ENCODE measurements at regions of chr12 and their contacts with region 1.

Region 1: GRCh38 chr12:85476756-85477155 is 196.7 kb downstream of the ALX1 start:
- DNase-seq: no peak
- ATAC-seq: no peak
- H3K4me3 ChIP-seq: no peak overlapping the region
- H3K27ac ChIP-seq: no peak overlapping the region
- H3K4me1 ChIP-seq: no peaks in the 10 kb centered on the region
- H3K27me3 ChIP-seq: no peaks in the 10 kb centered on the region
- CTCF ChIP-seq: no peak
- POLR2A ChIP-seq: no peak

Region 2: GRCh38 chr12:85568395-85569103 is 91.8 kb after region 1 on chr12:
- intact Hi-C with region 1: loop called (anchors 10 kb)
- DNase-seq: peak in 3 of 4 donors; percentile 15 to 17 (median 17)
- ATAC-seq: peak; percentile 71
- H3K4me3 ChIP-seq: no peak overlapping the region
- H3K27ac ChIP-seq: peak overlapping the region in 2 of 4 donors; percentile 26 to 39
- H3K4me1 ChIP-seq: no peaks in the 10 kb centered on the region
- H3K27me3 ChIP-seq: no peaks in the 10 kb centered on the region
- CTCF ChIP-seq: no peak
- POLR2A ChIP-seq: no peak

Region 3: GRCh38 chr12:85872497-85873091 is 395.8 kb after region 1 on chr12:
- intact Hi-C with region 1: loop called (anchors 5 kb)
- DNase-seq: peak in 1 of 4 donors; percentile 11
- ATAC-seq: peak; percentile 72
- H3K4me3 ChIP-seq: no peak overlapping the region
- H3K27ac ChIP-seq: no peak overlapping the region
- H3K4me1 ChIP-seq: no peaks in the 10 kb centered on the region
- H3K27me3 ChIP-seq: no peaks in the 10 kb centered on the region
- CTCF ChIP-seq: peak; percentile 20 to 75 (median 65)
- POLR2A ChIP-seq: no peak

Region 4: DNA sequence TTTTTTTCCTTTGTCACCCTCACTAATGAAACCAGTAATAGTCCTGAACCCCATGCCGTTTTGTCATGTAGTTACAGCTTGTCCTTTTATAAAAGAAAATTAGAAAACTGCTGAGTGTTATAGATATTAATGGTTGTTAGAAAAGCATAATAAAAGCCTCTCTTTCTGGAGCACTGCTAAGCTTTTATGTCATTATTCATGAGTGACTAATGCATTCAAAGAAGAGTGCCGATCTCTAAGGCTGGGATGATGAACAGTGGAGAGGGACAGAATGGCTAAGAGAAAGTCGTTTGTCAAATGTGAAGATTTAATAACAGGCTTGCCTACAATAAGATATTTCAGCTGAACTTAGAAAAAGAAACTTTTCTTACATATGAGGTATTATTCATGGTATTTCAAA is 657.8 kb after region 1 on chr12:
- intact Hi-C with region 1: no loop called
- DNase-seq: no peak
- ATAC-seq: no peak
- H3K4me3 ChIP-seq: no peak overlapping the region
- H3K27ac ChIP-seq: no peak overlapping the region
- H3K4me1 ChIP-seq: no peaks in the 10 kb centered on the region
- H3K27me3 ChIP-seq: no peaks in the 10 kb centered on the region
- CTCF ChIP-seq: no peak
- POLR2A ChIP-seq: no peak